ENCODE measurements at regions of chr17 and their contacts with region 1.

Region 1: DNA sequence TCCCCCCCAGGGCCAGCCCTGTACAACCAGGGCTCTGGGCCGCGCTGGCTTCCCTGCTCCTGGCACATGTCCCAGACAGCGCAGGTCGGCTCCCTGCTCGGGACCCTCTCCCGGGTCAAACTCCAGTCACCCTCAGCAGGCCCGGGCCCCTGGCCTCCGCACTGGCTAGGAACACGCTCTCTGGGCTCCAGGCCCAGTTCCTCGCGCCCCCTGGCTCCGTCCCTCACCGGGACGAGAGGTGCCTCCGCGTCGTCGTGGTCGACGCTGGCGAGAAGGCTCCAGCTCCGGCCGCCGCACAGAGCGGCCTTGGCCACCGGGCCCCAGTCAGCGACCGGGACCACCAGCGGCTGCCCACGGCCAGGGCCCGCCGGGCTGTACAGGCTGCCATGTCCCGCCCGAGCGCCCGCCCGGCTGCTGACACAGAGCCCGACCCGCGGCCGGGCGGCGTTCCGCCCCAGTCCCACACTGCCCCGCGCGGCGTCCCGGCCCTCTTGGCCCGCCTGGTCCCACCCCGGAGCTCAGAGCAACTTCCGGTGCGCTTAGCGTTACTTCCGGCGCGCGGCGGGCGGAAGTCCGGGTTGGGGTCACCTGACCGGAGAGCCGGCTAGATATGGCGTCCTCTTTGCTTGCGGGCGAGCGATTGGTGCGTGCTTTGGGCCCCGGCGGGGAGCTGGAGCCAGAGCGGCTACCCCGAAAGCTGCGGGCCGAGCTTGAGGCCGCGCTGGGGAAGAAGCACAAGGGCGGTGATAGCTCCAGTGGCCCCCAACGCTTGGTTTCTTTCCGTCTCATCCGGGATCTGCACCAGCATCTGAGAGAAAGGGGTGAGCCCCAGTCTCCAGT is at the start of gene POLDIP2:
- DNase-seq: peak; percentile 95
- ATAC-seq: peak; percentile 99
- H3K4me3 Mint-ChIP-seq: peak within 1 kb of the TSS; percentile 97
- H3K27ac Mint-ChIP-seq: peak within 1 kb of the TSS; percentile 92
- H3K4me1 Mint-ChIP-seq: peaks cover 34% of the 10 kb centered on the region
- H3K27me3 Mint-ChIP-seq: no peaks in the 10 kb centered on the region
- CTCF ChIP-seq: no peak
- total RNA-seq, gene POLDIP2: 87.6 to 88.7 TPM

Region 2: GRCh38 chr17:28298449-28298848 is 58.8 kb before region 1 on chr17:
- CTCF ChIA-PET with region 1: no interaction called
- POLR2A ChIA-PET with region 1: no interaction called
- intact Hi-C with region 1: no loop called
- DNase-seq: no peak
- ATAC-seq: no peak
- H3K4me3 Mint-ChIP-seq: no peak overlapping the region
- H3K27ac Mint-ChIP-seq: no peak overlapping the region
- H3K4me1 Mint-ChIP-seq: peaks cover 14% of the 10 kb centered on the region
- H3K27me3 Mint-ChIP-seq: peaks cover 6% of the 10 kb centered on the region
- CTCF ChIP-seq: no peak

Region 3: GRCh38 chr17:28318759-28319660 is 38.3 kb before region 1 on chr17 and contains the start of gene TMEM97:
- CTCF ChIA-PET with region 1: no interaction called
- POLR2A ChIA-PET with region 1: interaction called, 12 read pairs
- intact Hi-C with region 1: no loop called
- DNase-seq: peak; percentile 99
- ATAC-seq: peak; percentile 99
- H3K4me3 Mint-ChIP-seq: peak within 1 kb of the TSS; percentile 96
- H3K27ac Mint-ChIP-seq: peak within 1 kb of the TSS; percentile 92
- H3K4me1 Mint-ChIP-seq: peaks cover 32% of the 10 kb centered on the region
- H3K27me3 Mint-ChIP-seq: no peaks in the 10 kb centered on the region
- CTCF ChIP-seq: peak; percentile 29
- total RNA-seq, gene TMEM97: 36.1 to 36.2 TPM

Region 4: GRCh38 chr17:28335201-28335955 is 21.9 kb before region 1 on chr17 and contains the starts of genes IFT20 and TNFAIP1:
- CTCF ChIA-PET with region 1: interaction called, 19 read pairs
- POLR2A ChIA-PET with region 1: interaction called, 22 read pairs
- intact Hi-C with region 1: no loop called
- DNase-seq: peak; percentile 99
- ATAC-seq: peak; percentile 98
- H3K4me3 Mint-ChIP-seq: peak within 1 kb of the TSS; percentile 84
- H3K27ac Mint-ChIP-seq: peak within 1 kb of the TSS; percentile 80
- H3K4me1 Mint-ChIP-seq: peaks cover 31% of the 10 kb centered on the region
- H3K27me3 Mint-ChIP-seq: no peaks in the 10 kb centered on the region
- CTCF ChIP-seq: no peak
- total RNA-seq, gene IFT20: 16.7 to 18.8 TPM
- total RNA-seq, gene TNFAIP1: 19.5 to 20.9 TPM

Region 5: GRCh38 chr17:28346746-28347246 is 10.5 kb before region 1 on chr17:
- CTCF ChIA-PET with region 1: interaction called, 4 read pairs
- POLR2A ChIA-PET with region 1: interaction called, 33 read pairs
- intact Hi-C with region 1: no loop called
- DNase-seq: no peak
- ATAC-seq: no peak
- H3K4me3 Mint-ChIP-seq: no peak overlapping the region
- H3K27ac Mint-ChIP-seq: no peak overlapping the region
- H3K4me1 Mint-ChIP-seq: no peaks in the 10 kb centered on the region
- H3K27me3 Mint-ChIP-seq: no peaks in the 10 kb centered on the region
- CTCF ChIP-seq: no peak

Region 6: DNA sequence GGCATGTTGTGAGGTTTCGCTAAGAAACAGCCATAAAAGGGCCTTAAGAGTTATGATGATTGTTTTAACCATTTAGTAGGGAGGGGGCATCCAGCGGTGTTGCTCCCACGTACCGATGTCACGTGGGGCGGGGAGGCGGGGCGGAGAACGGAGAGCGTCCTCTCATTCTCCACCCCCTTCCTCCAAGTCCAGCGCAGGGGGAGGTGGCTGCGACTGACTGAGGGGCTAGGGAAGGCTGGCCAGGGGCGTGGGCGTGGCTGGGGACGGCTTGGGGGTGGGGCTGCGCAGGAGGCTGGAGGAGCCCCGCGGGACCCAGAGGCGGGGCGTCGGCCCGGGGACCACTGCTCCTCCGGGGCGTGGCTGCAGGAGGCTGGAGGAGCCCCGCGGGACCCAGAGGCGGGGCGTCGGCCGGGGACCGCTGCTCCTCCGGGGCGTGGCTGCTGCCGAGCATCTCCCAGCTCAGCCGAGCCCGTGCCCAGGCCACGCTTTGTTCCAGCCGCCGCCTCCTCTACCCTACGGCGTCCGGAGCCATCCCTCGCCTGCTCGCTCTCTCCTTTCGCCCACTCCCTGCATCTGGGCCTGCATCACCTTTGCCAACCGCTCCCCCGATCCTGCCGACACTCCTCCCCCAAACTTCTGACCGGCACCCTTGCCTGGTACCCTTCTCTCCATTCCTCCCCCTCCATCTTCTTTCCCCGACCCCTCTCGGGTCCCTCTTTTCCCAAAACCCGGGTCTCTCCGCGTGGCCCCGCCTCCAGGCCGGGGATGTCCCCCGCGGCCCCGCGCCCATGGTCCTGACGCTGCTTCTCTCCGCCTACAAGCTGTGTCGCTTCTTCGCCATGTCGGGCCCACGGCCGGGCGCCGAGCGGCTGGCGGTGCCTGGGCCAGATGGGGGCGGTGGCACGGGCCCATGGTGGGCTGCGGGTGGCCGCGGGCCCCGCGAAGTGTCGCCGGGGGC is 14.2 kb after region 1 on chr17 and contains the start of gene SARM1:
- CTCF ChIA-PET with region 1: interaction called, 4 read pairs
- POLR2A ChIA-PET with region 1: interaction called, 35 read pairs
- intact Hi-C with region 1: no loop called
- DNase-seq: peak; percentile 97
- ATAC-seq: peak; percentile 95
- H3K4me3 Mint-ChIP-seq: peak within 1 kb of the TSS; percentile 84
- H3K27ac Mint-ChIP-seq: peak within 1 kb of the TSS; percentile 86
- H3K4me1 Mint-ChIP-seq: peaks cover 20% of the 10 kb centered on the region
- H3K27me3 Mint-ChIP-seq: no peaks in the 10 kb centered on the region
- CTCF ChIP-seq: no peak
- total RNA-seq, gene SARM1: 16.7 to 19.8 TPM

Region 7: GRCh38 chr17:28384281-28385036 is 27.2 kb after region 1 on chr17:
- CTCF ChIA-PET with region 1: interaction called, 6 read pairs
- POLR2A ChIA-PET with region 1: interaction called, 15 read pairs
- intact Hi-C with region 1: no loop called
- DNase-seq: peak; percentile 80
- ATAC-seq: peak; percentile 94
- H3K4me3 Mint-ChIP-seq: peak overlapping the region; percentile 84
- H3K27ac Mint-ChIP-seq: peak overlapping the region; percentile 63
- H3K4me1 Mint-ChIP-seq: peaks cover 20% of the 10 kb centered on the region
- H3K27me3 Mint-ChIP-seq: peaks cover 2% of the 10 kb centered on the region
- CTCF ChIP-seq: no peak

Measured in activated CD8-positive, alpha-beta T cell treated with anti-CD3 and anti-CD28 coated beads for 36 hours (primary cell).